ENCODE measurements at regions of chr11 and their contacts with region 1.

Region 1: GRCh38 chr11:126202646-126203359 is 8.6 kb downstream of the RPUSD4 start:
- DNase-seq: no peak
- H3K4me3 ChIP-seq: no peak overlapping the region
- H3K27ac ChIP-seq: no peak overlapping the region
- H3K4me1 ChIP-seq: no peaks in the 10 kb centered on the region
- H3K27me3 ChIP-seq: no peaks in the 10 kb centered on the region
- CTCF ChIP-seq: no peak

Region 2: GRCh38 chr11:125910226-125910849 is 292.5 kb before region 1 on chr11:
- intact Hi-C with region 1: loop called (anchors 5 kb)
- DNase-seq: no peak
- H3K4me3 ChIP-seq: no peak overlapping the region
- H3K27ac ChIP-seq: no peak overlapping the region
- H3K4me1 ChIP-seq: no peaks in the 10 kb centered on the region
- H3K27me3 ChIP-seq: peaks cover 0 to 19% of the 10 kb centered on the region in 2 donors
- CTCF ChIP-seq: no peak

Region 3: DNA sequence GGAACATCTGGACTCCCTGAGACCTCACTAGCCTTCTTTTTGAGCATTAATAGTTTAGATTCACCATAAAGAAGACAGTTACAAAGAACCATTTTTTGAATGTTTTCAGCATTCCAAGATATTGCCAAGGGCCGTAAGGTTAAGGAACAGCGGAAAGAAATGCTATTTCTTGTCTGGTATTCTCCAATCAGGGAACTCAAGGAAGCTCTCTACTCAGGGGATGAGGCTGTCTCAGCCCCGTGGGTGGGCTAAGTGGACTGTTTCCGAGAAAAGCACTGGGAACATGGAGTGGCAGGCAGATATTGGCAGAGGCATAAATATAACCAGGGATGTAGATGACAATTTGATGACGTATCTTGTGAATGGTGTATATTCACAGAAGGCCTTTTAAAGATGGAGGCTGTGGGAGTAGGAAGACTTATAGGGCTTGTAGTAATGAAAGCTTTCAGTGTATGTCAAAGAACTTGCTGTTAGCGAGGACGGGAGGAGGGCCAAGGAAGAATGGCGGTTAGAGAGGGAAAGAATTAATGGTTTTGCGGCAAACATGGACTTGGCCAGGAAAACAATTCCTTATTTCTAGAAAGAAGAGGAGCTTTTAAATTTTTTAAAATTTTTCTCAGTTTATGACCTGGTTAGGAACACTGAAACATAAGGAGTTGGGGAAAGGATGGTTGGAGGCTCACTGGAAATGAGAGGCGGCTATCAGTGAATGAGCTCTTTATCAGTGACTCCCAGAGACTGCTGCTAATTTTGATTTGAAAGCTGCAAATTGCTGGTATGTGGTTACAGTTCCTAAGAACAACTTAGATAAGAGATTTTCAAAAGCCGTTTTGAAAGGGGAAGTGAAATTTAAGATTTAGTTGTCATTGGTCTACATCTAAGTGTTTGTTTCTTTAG is 217.2 kb after region 1 on chr11:
- intact Hi-C with region 1: no loop called
- DNase-seq: no peak
- H3K4me3 ChIP-seq: no peak overlapping the region
- H3K27ac ChIP-seq: peak overlapping the region in 1 of 2 donors; percentile 40
- H3K4me1 ChIP-seq: peaks cover 0 to 31% (median 23%) of the 10 kb centered on the region in 4 donors
- H3K27me3 ChIP-seq: no peaks in the 10 kb centered on the region
- CTCF ChIP-seq: no peak

Measured in tibial artery (tissue), 4 donors.